Prostate gland (tissue), 2 donors: ENCODE measurements at regions of chr9 and their contacts with region 1.

Region 1: GRCh38 chr9:36788534-36788933 is 215.8 kb downstream of the MELK start:
- DNase-seq: no peak
- H3K4me3 ChIP-seq: no peak overlapping the region
- H3K27ac ChIP-seq: no peak overlapping the region
- H3K4me1 ChIP-seq: no peaks in the 10 kb centered on the region
- H3K27me3 ChIP-seq: no peaks in the 10 kb centered on the region
- CTCF ChIP-seq: no peak
- POLR2A ChIP-seq: no peak

Region 2: DNA sequence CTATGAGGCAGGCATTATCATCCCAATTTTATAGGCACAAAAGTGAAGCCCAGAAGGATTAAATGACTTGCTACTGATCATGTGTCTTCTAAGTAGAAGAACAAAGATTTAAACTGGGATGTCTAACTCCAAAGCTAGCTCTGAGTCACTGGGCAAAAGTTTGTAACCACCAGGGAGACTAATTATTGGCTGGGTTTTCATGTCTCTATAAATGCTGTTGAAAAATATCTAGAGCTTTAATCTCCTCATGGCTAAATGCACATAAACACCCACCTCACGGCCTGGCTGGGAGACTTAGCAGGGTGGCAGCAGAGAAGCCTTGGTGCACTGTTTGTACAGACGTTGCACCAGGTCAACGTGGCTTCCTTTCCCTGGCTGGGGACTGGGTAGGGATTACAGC is 71.3 kb before region 1 on chr9:
- intact Hi-C with region 1: loop called (anchors 10 kb)
- DNase-seq: no peak
- H3K4me3 ChIP-seq: no peak overlapping the region
- H3K27ac ChIP-seq: no peak overlapping the region
- H3K4me1 ChIP-seq: no peaks in the 10 kb centered on the region
- H3K27me3 ChIP-seq: no peaks in the 10 kb centered on the region
- CTCF ChIP-seq: no peak
- POLR2A ChIP-seq: no peak